Ovary (tissue), 10 donors: ENCODE measurements at regions of chr4 and their contacts with region 1.

Region 1: GRCh38 chr4:185640811-185641675 is 105.7 kb upstream of the PDLIM3 start:
- DNase-seq: no peak
- H3K4me3 ChIP-seq: no peak overlapping the region
- H3K27ac ChIP-seq: no peak overlapping the region
- H3K4me1 ChIP-seq: no peaks in the 10 kb centered on the region
- H3K27me3 ChIP-seq: no peaks in the 10 kb centered on the region
- CTCF ChIP-seq: peak in 2 of 3 donors; percentile 43 to 49
- EP300 ChIP-seq: no peak
- POLR2A ChIP-seq: no peak

Region 2: GRCh38 chr4:185708348-185708747 is 67.3 kb after region 1 on chr4:
- intact Hi-C with region 1: no loop called
- DNase-seq: no peak
- H3K4me3 ChIP-seq: no peak overlapping the region
- H3K27ac ChIP-seq: no peak overlapping the region
- H3K4me1 ChIP-seq: peaks cover 1% of the 10 kb centered on the region
- H3K27me3 ChIP-seq: no peaks in the 10 kb centered on the region
- CTCF ChIP-seq: no peak
- EP300 ChIP-seq: no peak
- POLR2A ChIP-seq: no peak

Region 3: DNA sequence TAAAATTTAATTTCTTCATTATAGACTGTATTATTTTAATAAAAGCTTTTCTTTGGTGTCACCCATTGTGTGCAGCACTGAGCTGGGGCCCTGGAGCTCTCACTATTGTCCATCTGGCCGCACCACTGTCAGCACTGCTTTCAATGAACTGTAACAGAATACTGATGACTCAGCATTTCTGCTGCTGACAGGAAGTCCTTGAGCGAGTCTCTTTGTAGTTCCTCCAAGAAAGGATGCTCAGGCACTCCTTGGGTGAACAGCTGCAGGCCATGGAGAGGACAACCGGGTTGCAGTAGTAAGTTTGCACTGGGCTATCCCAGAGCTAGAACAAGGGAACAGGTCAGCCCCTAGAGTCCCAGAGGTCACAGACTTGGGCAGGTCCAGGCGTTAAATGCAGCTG is 89.3 kb after region 1 on chr4:
- intact Hi-C with region 1: loop called in 1 of 4 experiments (anchors 10 kb)
- DNase-seq: peak in 1 of 5 donors; percentile 45
- H3K4me3 ChIP-seq: no peak overlapping the region
- H3K27ac ChIP-seq: no peak overlapping the region
- H3K4me1 ChIP-seq: peaks cover 5% of the 10 kb centered on the region
- H3K27me3 ChIP-seq: no peaks in the 10 kb centered on the region
- CTCF ChIP-seq: no peak
- EP300 ChIP-seq: no peak
- POLR2A ChIP-seq: no peak

Region 4: DNA sequence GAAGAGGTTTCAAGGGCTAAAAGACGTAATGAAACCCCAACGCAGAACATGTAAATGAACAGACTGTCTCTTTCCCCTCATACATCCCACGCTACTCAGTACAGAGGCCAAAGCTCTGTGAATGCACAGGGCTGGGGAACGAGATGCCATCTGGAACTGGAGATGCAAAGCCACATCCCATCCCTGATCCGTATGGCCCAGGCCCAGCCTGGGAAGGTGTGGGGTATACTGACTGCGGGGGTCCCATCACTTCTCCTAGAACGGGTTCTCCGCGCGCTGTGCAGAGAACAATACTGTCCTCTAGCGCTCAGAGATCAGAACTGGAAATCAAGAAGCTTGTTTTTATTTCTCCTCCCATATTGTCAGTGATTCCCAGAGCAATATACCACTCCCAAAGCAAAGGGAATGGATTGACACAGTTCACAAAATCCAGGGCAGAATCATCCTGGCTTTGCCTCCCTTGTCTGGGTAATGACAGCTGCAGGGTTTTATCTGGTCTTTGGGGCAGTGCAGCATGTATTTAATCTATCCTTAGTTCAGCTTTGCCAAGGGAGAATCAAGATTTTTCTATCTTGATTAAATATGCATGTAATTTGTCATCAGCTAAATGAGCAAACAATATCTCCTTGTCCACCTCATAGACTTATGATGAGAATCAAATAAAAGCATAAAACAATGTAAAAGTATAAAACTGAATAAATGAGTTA is 380.6 kb after region 1 on chr4:
- intact Hi-C with region 1: loop called (anchors 5 to 10 kb)
- DNase-seq: peak; percentile 23 to 54 (median 47)
- H3K4me3 ChIP-seq: peak overlapping the region; percentile 6
- H3K27ac ChIP-seq: no peak overlapping the region
- H3K4me1 ChIP-seq: peaks cover 3% of the 10 kb centered on the region
- H3K27me3 ChIP-seq: no peaks in the 10 kb centered on the region
- CTCF ChIP-seq: peak; percentile 66 to 68 (median 68)
- EP300 ChIP-seq: no peak
- POLR2A ChIP-seq: no peak

Region 5: GRCh38 chr4:186029571-186030398 is 388.7 kb after region 1 on chr4:
- intact Hi-C with region 1: loop called (anchors 5 to 10 kb)
- DNase-seq: peak; percentile 53 to 82 (median 69)
- H3K4me3 ChIP-seq: no peak overlapping the region
- H3K27ac ChIP-seq: peak overlapping the region in 1 of 2 donors; percentile 36
- H3K4me1 ChIP-seq: peaks cover 10% of the 10 kb centered on the region
- H3K27me3 ChIP-seq: no peaks in the 10 kb centered on the region
- CTCF ChIP-seq: no peak
- EP300 ChIP-seq: no peak
- POLR2A ChIP-seq: no peak

Region 6: GRCh38 chr4:186037692-186038658 is 396.9 kb after region 1 on chr4:
- intact Hi-C with region 1: loop called in 1 of 4 experiments (anchors 5 kb)
- DNase-seq: peak in 3 of 5 donors; percentile 36 to 70 (median 48)
- H3K4me3 ChIP-seq: no peak overlapping the region
- H3K27ac ChIP-seq: no peak overlapping the region
- H3K4me1 ChIP-seq: peaks cover 5% of the 10 kb centered on the region
- H3K27me3 ChIP-seq: no peaks in the 10 kb centered on the region
- CTCF ChIP-seq: peak; percentile 69 to 91 (median 85)
- EP300 ChIP-seq: no peak
- POLR2A ChIP-seq: no peak